ENCODE measurements at regions of chr3 and their contacts with region 1.

Region 1: GRCh38 chr3:50396488-50396887 is 37.2 kb upstream of the TMEM115 start:
- DNase-seq: peak; percentile 84
- H3K4me3 ChIP-seq: no peak overlapping the region
- H3K27ac ChIP-seq: no peak overlapping the region
- H3K4me1 ChIP-seq: peaks cover 9% of the 10 kb centered on the region
- H3K27me3 ChIP-seq: peaks cover 5% of the 10 kb centered on the region
- CTCF ChIP-seq: no peak

Region 2: DNA sequence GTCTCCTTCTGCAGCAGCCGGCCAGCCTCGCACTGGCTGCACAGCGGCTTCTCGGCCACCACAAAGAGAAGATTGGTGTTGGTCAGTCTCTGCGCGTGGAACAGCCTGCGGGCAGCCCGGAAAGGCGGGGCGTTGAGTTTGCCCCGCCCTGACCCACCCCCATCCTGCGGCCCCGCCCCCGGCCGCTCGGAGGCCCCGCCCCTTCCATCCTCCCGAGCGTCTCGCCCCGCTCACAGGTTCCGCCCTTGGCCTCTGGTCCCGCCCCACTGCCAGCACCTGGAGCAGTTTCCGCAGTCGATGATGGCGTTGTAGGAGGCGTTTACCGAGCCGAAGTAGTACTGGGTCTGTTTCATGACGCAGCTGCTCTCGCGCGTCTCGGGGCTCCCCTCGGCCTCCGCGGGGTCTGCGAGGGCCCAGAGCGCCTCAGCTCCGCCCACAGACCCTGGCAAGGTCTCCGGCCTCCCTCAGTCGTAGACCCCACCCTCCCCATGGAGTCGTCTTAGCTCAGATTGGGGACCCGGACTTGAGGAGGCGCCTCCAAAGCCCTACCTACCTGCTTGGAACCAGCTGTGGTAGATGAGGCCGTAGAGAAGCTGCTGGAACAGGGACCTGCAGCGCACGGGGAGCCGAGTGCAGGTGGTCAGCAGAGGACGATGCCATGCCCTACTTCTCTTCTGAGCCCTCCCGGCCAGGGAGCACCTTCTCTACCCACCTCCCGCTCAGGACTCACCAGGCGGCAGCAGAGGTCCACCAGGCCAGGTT is 31.2 kb before region 1 on chr3:
- CTCF ChIA-PET with region 1: interaction called, 4 read pairs
- dilution Hi-C with region 1: loop called (anchors 5 kb)
- in situ Hi-C with region 1: no loop called
- intact Hi-C with region 1: no loop called
- DNase-seq: peak; percentile 85
- H3K4me3 ChIP-seq: peak overlapping the region; percentile 40 to 76 (median 62)
- H3K27ac ChIP-seq: no peak overlapping the region
- H3K4me1 ChIP-seq: peaks cover 14% of the 10 kb centered on the region
- H3K27me3 ChIP-seq: no peaks in the 10 kb centered on the region
- CTCF ChIP-seq: peak in 1 of 2 donors; percentile 25

Region 3: DNA sequence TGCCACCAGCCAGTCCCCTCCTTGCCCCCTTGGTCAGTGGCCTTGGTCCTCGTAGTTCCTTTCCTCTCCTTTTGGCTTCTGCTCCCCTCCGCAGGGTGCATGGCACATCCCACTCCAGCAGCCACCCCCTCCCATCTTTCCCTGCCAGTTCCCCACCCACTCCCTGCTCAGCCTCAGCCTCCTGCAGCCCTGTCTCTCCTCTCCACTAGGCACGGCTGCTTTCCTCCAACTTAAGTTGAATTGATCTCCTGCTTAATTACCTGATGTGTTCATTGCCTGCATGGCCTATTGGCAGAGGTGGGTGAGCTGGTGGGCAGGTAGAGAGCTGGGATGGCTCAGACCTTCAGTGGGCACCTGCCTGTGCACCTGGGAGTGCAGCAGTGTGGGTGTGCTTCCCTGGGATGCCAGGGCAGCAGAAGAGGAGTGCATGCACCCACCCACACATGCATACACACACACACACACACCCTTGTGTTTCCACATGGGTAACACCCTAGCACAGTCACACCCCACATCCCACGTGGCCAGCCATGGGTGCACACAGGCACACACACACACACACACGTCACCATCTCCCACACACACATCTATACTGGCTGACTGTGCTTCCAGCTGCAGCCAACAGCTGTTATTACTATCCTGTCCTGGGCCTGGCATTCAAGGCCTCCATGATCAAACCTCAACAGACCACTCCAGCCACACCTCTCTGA is 140.1 kb after region 1 on chr3:
- CTCF ChIA-PET with region 1: no interaction called
- dilution Hi-C with region 1: loop called (anchors 5 kb)
- in situ Hi-C with region 1: no loop called
- intact Hi-C with region 1: no loop called
- DNase-seq: peak; percentile 8
- H3K4me3 ChIP-seq: no peak overlapping the region
- H3K27ac ChIP-seq: no peak overlapping the region
- H3K4me1 ChIP-seq: peaks cover 9% of the 10 kb centered on the region
- H3K27me3 ChIP-seq: peaks cover 4% of the 10 kb centered on the region
- CTCF ChIP-seq: no peak

Measured in mammary epithelial cell (primary cell).